ENCODE measurements at regions of chr17 and their contacts with region 1.

Region 1: DNA sequence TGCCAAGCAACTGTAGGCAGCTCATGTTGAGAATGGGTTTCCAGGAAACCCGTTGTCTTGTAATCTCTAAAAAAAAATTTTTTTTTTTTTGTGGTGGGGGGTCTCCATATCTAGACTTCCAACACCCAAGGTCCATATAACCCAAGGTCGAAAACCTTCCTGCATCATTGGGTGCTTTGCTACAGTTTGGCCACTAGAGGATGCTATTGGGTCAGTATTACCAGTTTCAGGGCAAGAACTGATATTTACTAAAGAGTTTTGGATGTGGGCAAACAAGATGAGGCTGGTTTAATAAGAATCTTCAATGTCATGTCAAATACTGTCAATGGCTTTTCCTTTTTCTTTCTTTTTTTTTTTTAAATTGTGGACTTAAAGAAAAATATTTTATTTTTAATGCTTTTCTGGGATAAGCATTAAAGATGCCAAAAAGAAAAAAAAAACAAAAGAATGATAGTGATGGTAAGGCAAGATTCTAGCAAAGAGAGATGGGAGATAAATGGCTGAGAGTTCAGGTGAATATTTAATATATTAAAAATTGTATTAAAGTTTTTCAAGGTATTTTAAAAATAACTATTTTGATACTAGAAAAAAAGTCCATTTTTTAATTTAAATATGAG is 62.2 kb downstream of the DHRS7C start:
- DNase-seq: peak; percentile 45
- ATAC-seq: peak; percentile 77
- H3K4me3 ChIP-seq: no peak overlapping the region
- H3K27ac ChIP-seq: no peak overlapping the region
- H3K4me1 ChIP-seq: no peaks in the 10 kb centered on the region
- H3K27me3 ChIP-seq: peaks cover 3% of the 10 kb centered on the region; the same call in 1 of the 2 replicates
- CTCF ChIP-seq: peak; percentile 85
- POLR2A ChIP-seq: no peak
- RAD21 ChIP-seq: peak; percentile 81

Region 2: DNA sequence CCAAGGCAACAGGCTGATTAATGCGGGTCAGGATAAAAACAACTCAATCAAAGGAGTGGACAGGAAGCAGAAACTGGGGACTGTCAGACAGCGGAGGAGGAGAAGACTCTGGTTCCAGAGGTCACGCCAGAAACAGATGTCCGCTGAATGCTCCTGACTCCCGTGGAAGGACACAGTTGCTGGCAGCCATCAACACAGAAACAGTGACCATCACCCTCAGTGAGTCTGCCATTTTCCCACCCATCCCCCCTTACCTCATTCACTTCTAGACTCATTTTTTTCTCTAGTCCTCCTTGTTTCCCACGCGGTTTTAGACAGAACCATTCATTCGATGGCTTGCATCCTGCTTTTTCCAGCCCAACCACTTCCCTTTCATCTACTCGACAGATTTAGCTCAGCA is 21.4 kb after region 1 on chr17:
- CTCF ChIA-PET with region 1: no interaction called
- POLR2A ChIA-PET with region 1: no interaction called
- dilution Hi-C with region 1: no loop called
- in situ Hi-C with region 1: no loop called
- intact Hi-C with region 1: loop called (anchors 1 kb)
- DNase-seq: no peak
- ATAC-seq: no peak
- H3K4me3 ChIP-seq: no peak overlapping the region
- H3K27ac ChIP-seq: no peak overlapping the region
- H3K4me1 ChIP-seq: no peaks in the 10 kb centered on the region
- H3K27me3 ChIP-seq: no peaks in the 10 kb centered on the region
- CTCF ChIP-seq: no peak
- POLR2A ChIP-seq: no peak
- RAD21 ChIP-seq: no peak

Region 3: DNA sequence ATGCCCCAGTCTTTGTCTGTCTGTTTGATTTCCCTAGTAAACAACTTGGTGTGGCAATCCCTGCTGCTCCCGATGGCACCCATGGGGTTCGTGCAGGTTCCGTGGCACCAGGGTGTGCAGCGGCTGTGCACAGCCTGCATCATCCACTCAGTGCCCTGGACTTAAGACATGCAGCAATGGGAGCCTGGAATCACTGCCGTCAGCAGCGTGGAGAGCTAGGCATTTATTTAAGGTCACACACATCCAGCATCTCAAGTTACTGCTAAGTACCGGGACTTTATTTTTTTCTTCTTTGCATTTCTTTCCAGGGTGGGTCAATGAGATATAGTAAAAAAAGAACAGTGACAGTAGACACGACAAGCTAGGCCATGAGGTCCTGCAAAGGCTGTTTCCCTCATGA is 59.5 kb after region 1 on chr17:
- CTCF ChIA-PET with region 1: no interaction called
- POLR2A ChIA-PET with region 1: no interaction called
- dilution Hi-C with region 1: no loop called
- in situ Hi-C with region 1: loop called (anchors 10 kb)
- intact Hi-C with region 1: no loop called
- DNase-seq: no peak
- ATAC-seq: no peak
- H3K4me3 ChIP-seq: no peak overlapping the region
- H3K27ac ChIP-seq: no peak overlapping the region
- H3K4me1 ChIP-seq: no peaks in the 10 kb centered on the region
- H3K27me3 ChIP-seq: no peaks in the 10 kb centered on the region
- CTCF ChIP-seq: no peak
- POLR2A ChIP-seq: no peak
- RAD21 ChIP-seq: no peak

Region 4: DNA sequence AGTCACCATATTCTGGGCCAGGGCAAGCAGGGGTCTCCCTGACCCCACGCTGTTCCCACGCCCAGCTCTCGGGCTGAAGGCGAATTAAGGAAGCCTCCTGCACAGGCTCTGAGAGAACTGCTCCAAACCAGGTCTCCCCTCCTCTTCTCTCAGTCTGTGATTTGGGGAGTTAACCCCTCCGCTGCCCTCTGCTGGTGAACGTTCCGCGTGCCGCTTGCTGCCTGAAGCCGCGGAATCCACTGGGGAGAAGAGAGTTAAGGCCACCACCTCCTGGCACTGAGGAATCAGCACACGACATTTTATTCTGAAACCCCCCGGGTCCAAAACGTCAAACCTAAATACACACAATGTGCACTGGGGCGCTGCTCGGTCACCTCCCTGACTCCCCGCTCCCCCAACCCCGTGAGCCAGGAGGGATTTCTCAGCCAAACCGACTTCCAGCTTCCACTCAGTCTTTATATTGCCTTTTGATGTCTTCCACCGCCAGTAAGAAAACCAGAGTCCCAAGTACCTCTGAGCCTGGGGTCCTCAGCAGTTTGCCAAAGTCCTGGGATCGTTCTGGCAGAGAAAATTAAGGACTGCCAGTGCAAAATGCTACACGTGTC is 230.3 kb after region 1 on chr17:
- CTCF ChIA-PET with region 1: no interaction called
- POLR2A ChIA-PET with region 1: no interaction called
- dilution Hi-C with region 1: no loop called
- in situ Hi-C with region 1: no loop called
- intact Hi-C with region 1: loop called (anchors 1 kb)
- DNase-seq: peak; percentile 49
- ATAC-seq: peak; percentile 94
- H3K4me3 ChIP-seq: no peak overlapping the region
- H3K27ac ChIP-seq: no peak overlapping the region
- H3K4me1 ChIP-seq: no peaks in the 10 kb centered on the region
- H3K27me3 ChIP-seq: no peaks in the 10 kb centered on the region
- CTCF ChIP-seq: peak; percentile 59
- POLR2A ChIP-seq: no peak
- RAD21 ChIP-seq: peak; percentile 57

Measured in IMR-90 (cell line).